ENCODE measurements at regions of chr17 and their contacts with region 1.

Region 1: GRCh38 chr17:45135192-45135977 is at the start of gene ACBD4:
- DNase-seq: peak; percentile 94 to 99 (median 98)
- ATAC-seq: peak; percentile 88
- H3K4me3 ChIP-seq: peak within 1 kb of the TSS; percentile 87
- H3K4me3 Mint-ChIP-seq: peak within 1 kb of the TSS; percentile 94
- H3K27ac ChIP-seq: peak within 1 kb of the TSS; percentile 43 to 58
- H3K27ac Mint-ChIP-seq: peak within 1 kb of the TSS; percentile 85
- H3K4me1 ChIP-seq: peaks cover 37% of the 10 kb centered on the region
- H3K4me1 Mint-ChIP-seq: peaks cover 26% of the 10 kb centered on the region
- H3K27me3 ChIP-seq: no peaks in the 10 kb centered on the region
- H3K27me3 Mint-ChIP-seq: no peaks in the 10 kb centered on the region
- CTCF ChIP-seq: peak; percentile 100
- total RNA-seq, gene ACBD4: 24.8 to 26.3 TPM

Region 2: GRCh38 chr17:44775136-44775837 is 360.1 kb before region 1 on chr17:
- CTCF ChIA-PET with region 1: no interaction called
- POLR2A ChIA-PET with region 1: no interaction called
- intact Hi-C with region 1: loop called in 1 of 2 experiments (anchors 2 kb)
- DNase-seq: peak in 13 of 14 experiments; percentile 95 to 100 (median 98)
- ATAC-seq: peak; percentile 93
- H3K4me3 ChIP-seq: peak overlapping the region; percentile 74
- H3K4me3 Mint-ChIP-seq: peak overlapping the region; percentile 91
- H3K27ac ChIP-seq: no peak overlapping the region
- H3K27ac Mint-ChIP-seq: peak overlapping the region; percentile 78
- H3K4me1 ChIP-seq: peaks cover 35% of the 10 kb centered on the region
- H3K4me1 Mint-ChIP-seq: peaks cover 17% of the 10 kb centered on the region
- H3K27me3 ChIP-seq: peaks cover 0 to 9% of the 10 kb centered on the region in 2 experiments
- H3K27me3 Mint-ChIP-seq: peaks cover 14% of the 10 kb centered on the region
- CTCF ChIP-seq: peak; percentile 60

Region 3: GRCh38 chr17:45148183-45149036 is 13.0 kb after region 1 on chr17 and contains the start of gene HEXIM1:
- CTCF ChIA-PET with region 1: interaction called, 168 read pairs
- POLR2A ChIA-PET with region 1: interaction called, 192 read pairs
- intact Hi-C with region 1: loop called (anchors 1 to 2 kb)
- DNase-seq: peak; percentile 98 to 100 (median 99)
- ATAC-seq: peak; percentile 78
- H3K4me3 ChIP-seq: peak within 1 kb of the TSS; percentile 94
- H3K4me3 Mint-ChIP-seq: peak within 1 kb of the TSS; percentile 94
- H3K27ac ChIP-seq: peak within 1 kb of the TSS; percentile 93 to 97
- H3K27ac Mint-ChIP-seq: peak within 1 kb of the TSS; percentile 99
- H3K4me1 ChIP-seq: peaks cover 71% of the 10 kb centered on the region
- H3K4me1 Mint-ChIP-seq: peaks cover 69% of the 10 kb centered on the region
- H3K27me3 ChIP-seq: no peaks in the 10 kb centered on the region
- H3K27me3 Mint-ChIP-seq: peaks cover 8% of the 10 kb centered on the region
- CTCF ChIP-seq: no peak
- total RNA-seq, gene HEXIM1: 50.5 to 50.9 TPM

Region 4: GRCh38 chr17:45172454-45173286 is 37.3 kb after region 1 on chr17:
- CTCF ChIA-PET with region 1: interaction called, 13 read pairs
- POLR2A ChIA-PET with region 1: interaction called, 5 read pairs
- intact Hi-C with region 1: no loop called
- DNase-seq: peak; percentile 11 to 75 (median 52)
- ATAC-seq: peak; percentile 83
- H3K4me3 ChIP-seq: peak overlapping the region; percentile 45
- H3K4me3 Mint-ChIP-seq: peak overlapping the region; percentile 83
- H3K27ac ChIP-seq: peak overlapping the region in 1 of 2 donors; percentile 44
- H3K27ac Mint-ChIP-seq: peak overlapping the region; percentile 76
- H3K4me1 ChIP-seq: peaks cover 23% of the 10 kb centered on the region
- H3K4me1 Mint-ChIP-seq: peaks cover 26% of the 10 kb centered on the region
- H3K27me3 ChIP-seq: no peaks in the 10 kb centered on the region
- H3K27me3 Mint-ChIP-seq: no peaks in the 10 kb centered on the region
- CTCF ChIP-seq: peak; percentile 46

Region 5: DNA sequence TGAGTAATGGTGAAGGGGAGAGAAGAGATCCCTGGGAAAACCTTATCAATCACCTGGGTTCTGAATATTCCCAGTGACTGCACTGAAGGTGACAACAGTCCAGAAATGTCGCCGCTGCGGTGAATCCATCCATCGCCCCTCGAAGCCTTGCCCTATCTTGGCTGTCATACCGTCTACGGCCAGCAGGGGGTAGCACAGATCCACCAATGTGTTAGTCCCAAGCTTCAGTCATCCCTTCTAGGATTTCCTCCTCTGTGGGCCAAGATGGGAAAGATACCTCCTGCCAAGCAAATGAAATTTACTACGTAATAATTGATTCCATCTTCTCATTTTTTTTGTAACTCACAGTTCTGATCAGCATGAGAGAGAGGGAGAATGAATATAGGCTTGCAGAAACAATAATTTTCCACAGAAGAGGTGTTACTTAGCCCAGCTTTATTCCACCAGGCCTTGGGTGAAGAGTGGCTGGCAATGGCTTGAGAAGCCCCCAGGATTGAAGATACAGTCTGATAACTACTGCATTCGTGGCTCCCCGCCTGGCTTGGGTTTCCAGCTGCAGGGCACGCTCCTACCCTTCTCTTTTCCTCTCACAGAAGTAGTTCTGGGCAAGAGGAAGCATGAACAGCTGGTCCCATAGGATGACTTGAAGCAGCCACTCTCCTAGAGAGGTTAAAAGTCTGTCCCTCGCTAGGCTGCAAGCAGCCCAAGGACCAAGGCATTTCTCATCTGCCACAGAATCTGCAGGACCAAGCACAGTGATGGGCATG is 83.7 kb after region 1 on chr17:
- CTCF ChIA-PET with region 1: interaction called, 25 read pairs
- POLR2A ChIA-PET with region 1: interaction called, 7 read pairs
- intact Hi-C with region 1: no loop called
- DNase-seq: peak; percentile 74 to 94 (median 86)
- ATAC-seq: peak; percentile 43
- H3K4me3 ChIP-seq: peak overlapping the region; percentile 4
- H3K4me3 Mint-ChIP-seq: peak overlapping the region; percentile 91
- H3K27ac ChIP-seq: peak overlapping the region in 1 of 2 donors; percentile 17
- H3K27ac Mint-ChIP-seq: peak overlapping the region; percentile 76
- H3K4me1 ChIP-seq: peaks cover 38% of the 10 kb centered on the region
- H3K4me1 Mint-ChIP-seq: peaks cover 36% of the 10 kb centered on the region
- H3K27me3 ChIP-seq: no peaks in the 10 kb centered on the region
- H3K27me3 Mint-ChIP-seq: no peaks in the 10 kb centered on the region
- CTCF ChIP-seq: peak; percentile 99

Region 6: DNA sequence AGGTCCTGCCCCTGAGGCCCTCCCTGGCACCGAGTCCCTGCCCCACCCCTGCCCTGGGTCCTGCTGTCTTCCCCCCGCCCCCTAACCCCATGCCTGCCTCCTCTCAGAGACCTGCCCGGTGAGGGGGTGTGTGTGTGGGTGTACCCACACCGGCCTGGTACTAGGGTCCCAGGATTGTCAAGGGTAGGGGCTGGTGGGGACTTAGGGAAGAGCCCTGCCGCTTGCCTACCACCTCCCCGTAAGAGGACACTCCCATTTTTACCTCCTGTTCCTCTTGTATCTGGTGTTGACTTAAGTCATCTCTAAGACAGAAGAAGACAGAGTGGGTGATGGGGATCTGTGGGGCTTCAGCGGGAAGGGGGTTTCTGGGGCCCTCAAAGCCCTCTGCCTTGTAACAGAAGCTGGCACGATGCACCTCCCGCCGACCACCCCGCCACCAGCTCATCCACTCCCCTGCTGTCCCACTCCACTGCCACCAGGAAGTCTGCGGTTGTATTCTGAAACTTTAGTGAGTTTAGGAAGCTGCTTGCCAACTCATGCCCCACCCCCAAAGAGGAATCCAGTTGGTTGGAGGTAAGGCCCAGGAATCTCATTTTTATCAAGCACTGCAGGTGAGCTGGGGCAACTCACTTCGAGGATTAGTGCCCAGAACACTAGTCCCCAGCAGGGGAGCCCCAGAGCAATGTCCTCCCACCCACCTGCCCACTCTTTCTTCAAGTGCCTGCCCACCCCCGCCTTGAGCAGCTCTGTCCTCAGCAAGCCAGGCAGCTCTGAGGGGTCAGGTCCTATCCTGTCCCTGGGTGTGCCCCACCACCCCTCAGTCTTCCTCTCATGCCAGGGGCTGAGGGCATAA is 121.0 kb after region 1 on chr17:
- CTCF ChIA-PET with region 1: no interaction called
- POLR2A ChIA-PET with region 1: no interaction called
- intact Hi-C with region 1: no loop called
- DNase-seq: peak in 1 of 14 experiments; percentile 36
- ATAC-seq: peak; percentile 69
- H3K4me3 ChIP-seq: no peak overlapping the region
- H3K4me3 Mint-ChIP-seq: peak overlapping the region; percentile 61
- H3K27ac ChIP-seq: peak overlapping the region in 1 of 2 donors; percentile 46
- H3K27ac Mint-ChIP-seq: peak overlapping the region; percentile 79
- H3K4me1 ChIP-seq: peaks cover 51% of the 10 kb centered on the region
- H3K4me1 Mint-ChIP-seq: peaks cover 72% of the 10 kb centered on the region
- H3K27me3 ChIP-seq: no peaks in the 10 kb centered on the region
- H3K27me3 Mint-ChIP-seq: no peaks in the 10 kb centered on the region
- CTCF ChIP-seq: peak; percentile 14

Region 7: GRCh38 chr17:45307290-45308015 is 172.1 kb after region 1 on chr17:
- CTCF ChIA-PET with region 1: interaction called, 11 read pairs
- POLR2A ChIA-PET with region 1: no interaction called
- intact Hi-C with region 1: no loop called
- DNase-seq: peak in 6 of 14 experiments; percentile 18 to 66 (median 42)
- ATAC-seq: peak; percentile 72
- H3K4me3 ChIP-seq: no peak overlapping the region
- H3K4me3 Mint-ChIP-seq: peak overlapping the region; percentile 66
- H3K27ac ChIP-seq: peak overlapping the region; percentile 26 to 38
- H3K27ac Mint-ChIP-seq: peak overlapping the region; percentile 82
- H3K4me1 ChIP-seq: peaks cover 85% of the 10 kb centered on the region
- H3K4me1 Mint-ChIP-seq: peaks cover 83% of the 10 kb centered on the region
- H3K27me3 ChIP-seq: no peaks in the 10 kb centered on the region
- H3K27me3 Mint-ChIP-seq: no peaks in the 10 kb centered on the region
- CTCF ChIP-seq: no peak